IMR-90 (cell line): ENCODE measurements at regions of chr10 and their contacts with region 1.

Region 1: DNA sequence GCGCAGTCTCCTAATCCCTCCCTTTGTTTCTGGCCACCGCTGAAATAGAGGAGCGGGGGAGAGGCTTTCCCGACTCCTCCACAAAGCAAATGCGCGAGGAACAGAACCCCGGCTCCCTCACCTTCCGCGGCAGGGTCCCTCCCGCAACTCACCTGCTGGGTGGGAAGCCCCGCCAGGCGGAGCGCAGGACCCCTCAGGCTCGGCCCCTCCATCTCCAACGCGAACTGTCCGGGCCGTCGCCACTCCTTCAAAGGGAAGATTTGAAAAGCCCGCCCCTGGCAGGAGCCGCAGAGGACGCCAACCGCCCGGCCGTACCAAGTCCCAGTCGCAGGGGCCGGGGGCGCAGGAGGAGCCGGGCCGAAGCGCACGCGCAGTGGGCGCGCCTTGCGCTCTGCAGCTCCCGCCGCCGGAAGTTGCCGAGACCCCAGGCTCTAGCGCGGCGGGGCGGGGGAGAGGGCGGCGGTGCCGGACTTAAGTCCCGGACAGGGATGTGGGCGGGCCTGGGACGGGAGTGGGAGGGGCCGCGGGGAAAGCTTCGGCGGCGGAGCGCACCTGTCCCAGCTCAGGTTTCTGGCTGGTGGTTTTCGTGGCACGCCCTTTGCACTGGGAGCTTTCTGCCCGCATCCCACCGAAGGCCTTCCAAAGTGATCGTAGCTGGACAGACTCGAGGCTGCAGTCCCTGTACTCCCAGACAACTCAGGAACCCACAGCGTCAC is at the start of gene RTKN2:
- DNase-seq: peak; percentile 76
- ATAC-seq: peak; percentile 87
- H3K4me3 ChIP-seq: peak within 1 kb of the TSS; percentile 68
- H3K27ac ChIP-seq: peak within 1 kb of the TSS; percentile 9; the same call in 1 of the 2 replicates
- H3K4me1 ChIP-seq: peaks cover 2% of the 10 kb centered on the region; the same call in 1 of the 2 replicates
- H3K27me3 ChIP-seq: peaks cover 6% of the 10 kb centered on the region; the same call in 1 of the 2 replicates
- CTCF ChIP-seq: no peak
- POLR2A ChIP-seq: peak; percentile 35; the same call in 1 of the 2 replicates
- RAD21 ChIP-seq: no peak
- total RNA-seq, gene RTKN2: 0.90 and 2.2 TPM in 2 replicates

Region 2: DNA sequence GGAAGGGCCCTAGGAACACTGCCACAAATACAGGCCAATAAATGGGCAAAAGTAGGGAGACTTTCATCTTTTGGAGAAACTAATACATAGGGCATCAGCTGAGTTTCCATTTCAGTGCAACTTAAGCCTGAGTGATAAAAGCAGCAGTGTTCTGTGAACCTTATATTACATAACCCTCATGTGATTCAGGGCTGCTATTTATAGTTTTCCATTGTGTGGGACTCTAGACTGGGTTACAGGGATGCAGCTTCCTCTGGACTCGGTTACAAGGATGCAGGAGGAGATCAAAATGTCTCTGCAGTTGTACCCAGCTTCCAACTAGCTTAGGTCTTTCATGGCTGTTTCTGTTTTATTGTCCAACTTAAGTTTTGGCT is 1457.8 kb before region 1 on chr10:
- CTCF ChIA-PET with region 1: no interaction called
- POLR2A ChIA-PET with region 1: no interaction called
- dilution Hi-C with region 1: no loop called
- in situ Hi-C with region 1: no loop called
- intact Hi-C with region 1: loop called (anchors 10 kb)
- DNase-seq: peak; percentile 60
- ATAC-seq: 0 out of 2 replicates have a peak, but pooled peaks have one; percentile 18
- H3K4me3 ChIP-seq: no peak overlapping the region
- H3K27ac ChIP-seq: no peak overlapping the region
- H3K4me1 ChIP-seq: peaks cover 4% of the 10 kb centered on the region
- H3K27me3 ChIP-seq: no peaks in the 10 kb centered on the region
- CTCF ChIP-seq: no peak
- POLR2A ChIP-seq: no peak
- RAD21 ChIP-seq: no peak

Region 3: DNA sequence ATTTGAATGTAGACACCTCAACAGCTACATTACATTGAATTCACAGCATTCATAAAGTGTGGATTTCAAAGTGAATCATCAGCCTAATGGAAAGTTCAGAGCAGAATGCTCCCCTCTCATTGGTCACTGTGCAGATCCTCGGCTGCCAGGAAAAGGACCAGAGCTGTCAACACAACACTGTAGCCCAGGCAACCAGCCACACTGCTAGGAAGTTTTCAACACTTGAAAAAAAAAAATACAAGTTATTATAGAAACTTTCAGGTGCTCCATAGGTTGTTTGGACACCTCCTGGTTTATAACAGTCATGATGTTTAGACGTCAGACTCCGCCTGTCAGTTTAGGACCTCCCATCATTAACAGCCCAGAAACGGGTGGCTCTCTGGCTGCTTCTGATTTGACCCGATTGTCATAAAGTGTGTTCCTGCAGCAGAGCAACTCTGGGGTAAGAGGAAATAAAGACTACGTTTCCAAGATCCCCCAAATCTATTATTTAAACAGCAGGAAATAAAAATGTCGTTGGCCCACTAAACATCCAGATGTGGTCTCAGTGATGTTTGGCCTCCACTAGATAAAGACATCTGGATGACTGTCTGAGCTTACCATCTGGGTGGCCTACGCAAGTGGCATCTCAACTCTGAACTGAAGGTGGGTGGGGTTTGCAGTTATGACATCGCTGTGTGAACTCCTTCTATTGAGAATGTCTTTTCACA is 488.5 kb before region 1 on chr10:
- CTCF ChIA-PET with region 1: no interaction called
- POLR2A ChIA-PET with region 1: no interaction called
- dilution Hi-C with region 1: no loop called
- in situ Hi-C with region 1: no loop called
- intact Hi-C with region 1: no loop called
- DNase-seq: peak; percentile 74
- ATAC-seq: peak; percentile 65; the same call in 1 of the 2 replicates
- H3K4me3 ChIP-seq: no peak overlapping the region
- H3K27ac ChIP-seq: no peak overlapping the region
- H3K4me1 ChIP-seq: no peaks in the 10 kb centered on the region
- H3K27me3 ChIP-seq: no peaks in the 10 kb centered on the region
- CTCF ChIP-seq: no peak
- POLR2A ChIP-seq: no peak
- RAD21 ChIP-seq: no peak

Region 4: DNA sequence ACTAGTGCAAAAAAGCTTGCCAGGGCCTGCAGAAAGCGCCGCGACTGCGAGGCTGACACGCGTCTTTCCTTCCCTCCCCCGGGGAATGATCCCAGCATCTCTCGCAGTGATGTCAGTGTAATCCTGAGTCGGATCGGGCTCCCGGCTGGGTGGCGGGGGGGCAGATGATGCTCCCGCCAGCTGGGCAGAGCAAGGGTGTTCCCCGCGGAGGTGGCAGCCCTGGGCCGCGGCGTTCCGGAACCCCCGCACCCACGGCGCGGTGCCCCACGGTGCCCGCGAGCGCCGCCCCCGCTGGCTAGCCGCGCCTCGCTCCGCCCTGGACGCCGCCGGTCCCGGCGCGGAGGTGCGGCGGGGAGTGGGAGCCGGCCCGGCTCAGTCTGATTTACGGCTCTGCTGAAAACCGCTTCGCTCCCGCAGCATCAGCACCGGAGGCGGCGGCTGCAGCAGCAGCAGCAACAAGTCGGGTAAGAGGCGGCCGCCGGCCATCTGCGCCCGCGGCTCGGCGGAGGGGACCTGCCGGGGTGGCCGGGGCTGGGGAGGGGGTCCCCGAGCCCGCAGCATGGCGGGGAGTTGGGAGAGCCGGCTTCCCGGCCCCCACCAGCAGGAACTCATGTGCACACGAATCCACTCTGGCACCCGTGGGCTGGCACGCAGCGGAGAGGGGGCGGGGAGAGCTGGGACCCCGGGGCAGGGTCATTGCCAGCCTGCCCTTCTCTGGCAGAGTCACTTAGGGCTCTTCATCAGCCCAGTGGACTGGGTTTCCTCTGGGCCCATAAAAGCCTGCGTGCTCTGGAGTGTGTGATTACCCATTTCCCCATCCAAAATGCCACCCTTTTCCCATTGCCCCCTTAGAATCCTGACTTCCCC is 105.7 kb after region 1 on chr10 and contains the start of gene ZNF365:
- CTCF ChIA-PET with region 1: no interaction called
- POLR2A ChIA-PET with region 1: no interaction called
- dilution Hi-C with region 1: no loop called
- in situ Hi-C with region 1: no loop called
- intact Hi-C with region 1: loop called (anchors 2 kb)
- DNase-seq: peak; percentile 47
- ATAC-seq: peak; percentile 96
- H3K4me3 ChIP-seq: peak within 1 kb of the TSS; percentile 49
- H3K27ac ChIP-seq: no peak within 1 kb of the TSS; the same call in 1 of the 2 replicates
- H3K4me1 ChIP-seq: no peaks in the 10 kb centered on the region
- H3K27me3 ChIP-seq: peaks cover under 1% of the 10 kb centered on the region; the same call in 1 of the 2 replicates
- CTCF ChIP-seq: no peak
- POLR2A ChIP-seq: no peak
- RAD21 ChIP-seq: no peak
- total RNA-seq, gene ZNF365: 2.5 and 3.2 TPM in 2 replicates

Region 5: DNA sequence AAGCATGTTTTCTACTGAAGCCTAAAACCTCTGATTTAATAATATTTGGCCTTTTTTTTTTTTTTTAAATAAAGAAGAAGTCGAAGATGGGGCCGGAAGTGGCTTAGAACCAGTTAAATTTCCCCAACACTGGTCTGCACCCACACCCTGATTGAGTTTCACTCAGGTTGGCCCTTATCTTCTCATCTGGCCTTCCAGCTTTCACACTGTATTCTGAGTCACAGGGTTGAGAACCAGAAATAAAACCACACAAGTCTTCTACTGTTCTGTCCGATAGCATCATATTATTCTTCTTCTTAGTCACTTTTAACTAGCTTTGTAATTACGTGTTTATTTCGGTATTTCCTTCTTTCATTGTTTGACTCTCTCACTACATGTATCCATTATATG is 115.5 kb after region 1 on chr10:
- CTCF ChIA-PET with region 1: no interaction called
- POLR2A ChIA-PET with region 1: no interaction called
- dilution Hi-C with region 1: no loop called
- in situ Hi-C with region 1: no loop called
- intact Hi-C with region 1: loop called (anchors 2 kb)
- DNase-seq: peak; percentile 88
- ATAC-seq: peak; percentile 62
- H3K4me3 ChIP-seq: no peak overlapping the region
- H3K27ac ChIP-seq: no peak overlapping the region
- H3K4me1 ChIP-seq: peaks cover 5% of the 10 kb centered on the region
- H3K27me3 ChIP-seq: no peaks in the 10 kb centered on the region
- CTCF ChIP-seq: no peak
- POLR2A ChIP-seq: no peak
- RAD21 ChIP-seq: no peak

Region 6: GRCh38 chr10:62594093-62594520 is 325.6 kb after region 1 on chr10:
- CTCF ChIA-PET with region 1: interaction called, 3 read pairs
- POLR2A ChIA-PET with region 1: no interaction called
- dilution Hi-C with region 1: no loop called
- in situ Hi-C with region 1: no loop called
- intact Hi-C with region 1: loop called (anchors 5 kb)
- DNase-seq: peak; percentile 56
- ATAC-seq: peak; percentile 96
- H3K4me3 ChIP-seq: no peak overlapping the region
- H3K27ac ChIP-seq: no peak overlapping the region
- H3K4me1 ChIP-seq: no peaks in the 10 kb centered on the region
- H3K27me3 ChIP-seq: no peaks in the 10 kb centered on the region
- CTCF ChIP-seq: peak; percentile 93
- POLR2A ChIP-seq: no peak
- RAD21 ChIP-seq: peak; percentile 93

Region 7: DNA sequence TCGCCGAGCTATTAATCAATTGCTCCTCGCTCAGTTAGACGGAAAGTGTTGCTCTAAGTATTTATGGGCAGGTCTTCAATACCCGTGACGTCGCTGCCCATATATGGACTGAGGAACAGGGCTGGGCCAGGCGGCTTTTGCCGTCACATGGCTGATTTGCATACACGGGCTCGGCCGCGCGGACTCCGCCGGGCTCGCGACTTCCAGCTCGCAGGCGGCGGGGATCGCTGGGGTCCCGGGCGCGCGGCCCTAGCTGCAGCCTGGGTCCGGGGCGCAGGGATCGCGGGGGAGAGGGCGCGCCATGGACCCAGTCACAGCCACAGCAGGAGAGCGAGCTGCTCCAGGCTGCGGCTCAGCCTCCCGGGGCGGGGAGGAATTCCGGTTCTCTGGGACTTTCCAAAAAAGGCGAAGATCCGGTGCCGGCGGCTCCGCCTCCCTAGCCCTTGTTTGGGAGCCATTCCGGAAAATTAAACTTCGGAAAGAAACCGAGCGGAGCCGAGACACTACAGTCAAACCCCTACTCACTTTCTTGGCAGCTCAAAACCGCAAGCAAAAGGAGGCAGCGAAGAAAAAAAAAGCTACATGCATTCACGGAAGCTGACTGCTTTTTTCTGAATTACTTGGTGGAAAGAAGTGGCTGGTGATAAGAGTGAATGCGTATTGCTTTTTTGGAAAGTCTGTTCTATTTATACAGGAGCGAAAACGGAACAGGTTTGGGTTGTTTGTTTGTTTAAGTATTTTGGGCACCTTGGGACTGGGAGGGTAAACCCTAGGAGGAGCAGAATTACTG is 548.0 kb after region 1 on chr10 and contains the start of gene EGR2:
- CTCF ChIA-PET with region 1: no interaction called
- POLR2A ChIA-PET with region 1: no interaction called
- dilution Hi-C with region 1: no loop called
- in situ Hi-C with region 1: loop called (anchors 25 kb)
- intact Hi-C with region 1: loop called (anchors 5 kb)
- DNase-seq: peak; percentile 94
- ATAC-seq: peak; percentile 91
- H3K4me3 ChIP-seq: peak within 1 kb of the TSS; percentile 73
- H3K27ac ChIP-seq: peak within 1 kb of the TSS; percentile 53
- H3K4me1 ChIP-seq: peaks cover 7% of the 10 kb centered on the region; the same call in 1 of the 2 replicates
- H3K27me3 ChIP-seq: peaks cover 48% of the 10 kb centered on the region
- CTCF ChIP-seq: no peak
- POLR2A ChIP-seq: peak; percentile 50
- RAD21 ChIP-seq: no peak
- total RNA-seq, gene EGR2: 0.36 and 0.56 TPM in 2 replicates

Region 8: GRCh38 chr10:63083904-63084689 is 815.5 kb after region 1 on chr10:
- CTCF ChIA-PET with region 1: no interaction called
- POLR2A ChIA-PET with region 1: no interaction called
- dilution Hi-C with region 1: no loop called
- in situ Hi-C with region 1: no loop called
- intact Hi-C with region 1: loop called (anchors 2 kb)
- DNase-seq: peak; percentile 77
- ATAC-seq: peak; percentile 95
- H3K4me3 ChIP-seq: no peak overlapping the region
- H3K27ac ChIP-seq: no peak overlapping the region
- H3K4me1 ChIP-seq: no peaks in the 10 kb centered on the region; the same call in 1 of the 2 replicates
- H3K27me3 ChIP-seq: no peaks in the 10 kb centered on the region; the same call in 1 of the 2 replicates
- CTCF ChIP-seq: peak; percentile 74
- POLR2A ChIP-seq: no peak
- RAD21 ChIP-seq: peak; percentile 81